ENCODE measurements at regions of chrX and their contacts with region 1.

Region 1: DNA sequence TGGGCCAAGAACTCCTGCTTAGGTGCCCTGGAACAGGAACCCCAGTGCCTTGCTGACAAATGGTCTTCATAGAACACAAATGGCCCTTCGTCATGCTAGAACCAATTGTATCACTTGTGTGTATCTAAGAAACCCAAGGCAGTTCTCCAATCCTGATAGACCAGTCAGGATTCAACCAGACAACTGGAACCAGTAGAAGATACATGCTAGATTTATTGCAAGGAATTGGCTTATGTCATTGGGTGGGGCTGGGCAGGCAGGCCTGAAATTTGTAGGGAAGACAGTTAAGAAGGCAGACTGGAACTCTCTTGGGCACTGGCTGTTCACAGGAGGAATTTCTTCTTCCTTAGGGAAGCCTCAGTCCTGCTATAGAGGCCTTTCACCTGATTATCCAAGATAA is 17.0 kb upstream of the TBL1X start:
- DNase-seq: no peak
- ATAC-seq: peak; percentile 51

Region 2: GRCh38 chrX:9352694-9353411 is 95.1 kb before region 1 on chrX:
- intact Hi-C with region 1: loop called in 1 of 2 experiments (anchors 5 kb)
- DNase-seq: no peak
- ATAC-seq: peak; percentile 34

Measured in left colon (tissue), 2 donors.